CD8-positive, alpha-beta T cell (primary cell): ENCODE measurements at regions of chr16 and their contacts with region 1.

Region 1: GRCh38 chr16:85717393-85718121 is 28.8 kb upstream of the GINS2 start:
- DNase-seq: peak; percentile 17 to 72 (median 54)
- ATAC-seq: peak; percentile 31
- H3K4me3 ChIP-seq: no peak overlapping the region
- H3K4me3 Mint-ChIP-seq: no peak overlapping the region
- H3K27ac ChIP-seq: no peak overlapping the region
- H3K27ac Mint-ChIP-seq: no peak overlapping the region
- H3K4me1 ChIP-seq: peaks cover 19% of the 10 kb centered on the region
- H3K4me1 Mint-ChIP-seq: peaks cover 14% of the 10 kb centered on the region
- H3K27me3 ChIP-seq: peaks cover 0 to 5% of the 10 kb centered on the region in 2 experiments
- H3K27me3 Mint-ChIP-seq: no peaks in the 10 kb centered on the region
- CTCF ChIP-seq: peak; percentile 88

Region 2: GRCh38 chr16:85369741-85370528 is 347.6 kb before region 1 on chr16:
- CTCF ChIA-PET with region 1: interaction called, 4 read pairs
- POLR2A ChIA-PET with region 1: no interaction called
- intact Hi-C with region 1: loop called in 1 of 2 experiments (anchors 1 kb)
- DNase-seq: peak; percentile 16 to 67 (median 48)
- ATAC-seq: peak; percentile 78
- H3K4me3 ChIP-seq: no peak overlapping the region
- H3K4me3 Mint-ChIP-seq: no peak overlapping the region
- H3K27ac ChIP-seq: no peak overlapping the region
- H3K27ac Mint-ChIP-seq: no peak overlapping the region
- H3K4me1 ChIP-seq: no peaks in the 10 kb centered on the region
- H3K4me1 Mint-ChIP-seq: no peaks in the 10 kb centered on the region
- H3K27me3 ChIP-seq: no peaks in the 10 kb centered on the region
- H3K27me3 Mint-ChIP-seq: no peaks in the 10 kb centered on the region
- CTCF ChIP-seq: peak; percentile 72

Region 3: DNA sequence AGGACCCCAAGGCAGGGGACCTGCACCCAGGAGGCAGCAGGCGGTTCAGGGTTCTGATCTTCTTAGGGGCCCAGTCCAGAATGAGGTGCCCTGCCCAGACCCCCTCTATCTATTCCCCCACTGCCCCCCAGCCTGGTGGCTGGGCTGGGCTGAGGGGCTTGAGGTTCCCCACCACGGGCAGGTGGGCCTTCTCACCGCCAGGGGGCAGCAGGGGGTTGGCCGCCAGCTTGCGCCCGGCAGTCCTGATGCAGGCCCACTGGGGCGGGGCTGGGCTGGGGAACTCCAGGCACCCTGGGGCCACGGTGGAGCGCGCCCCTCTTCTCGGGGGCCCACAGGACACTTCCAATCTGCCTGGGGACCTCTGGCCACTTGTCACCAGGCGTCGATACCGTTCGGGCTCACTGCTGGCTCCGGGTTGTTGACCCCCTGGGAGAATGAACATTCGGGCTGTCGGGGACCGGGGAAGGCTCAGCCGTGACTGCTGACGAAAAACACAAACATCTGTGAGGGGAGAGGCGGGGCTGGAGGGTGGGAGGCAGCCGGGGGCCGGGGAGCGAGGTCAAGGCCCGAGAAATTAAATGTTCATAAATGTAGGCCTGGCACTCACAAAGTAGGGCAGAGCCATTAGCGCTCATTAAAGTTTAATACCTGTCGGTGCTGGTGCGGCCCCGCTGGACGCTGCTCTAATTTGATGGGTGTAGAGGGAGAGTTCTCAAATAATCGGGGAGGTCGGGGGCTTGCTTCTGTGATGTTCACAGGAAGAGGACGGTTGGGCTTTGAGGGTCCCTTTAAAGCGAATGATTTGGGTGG is 323.7 kb before region 1 on chr16:
- CTCF ChIA-PET with region 1: interaction called, 3 read pairs
- POLR2A ChIA-PET with region 1: no interaction called
- intact Hi-C with region 1: loop called (anchors 1 to 5 kb)
- DNase-seq: peak; percentile 45 to 83 (median 69)
- ATAC-seq: peak; percentile 84
- H3K4me3 ChIP-seq: no peak overlapping the region
- H3K4me3 Mint-ChIP-seq: no peak overlapping the region
- H3K27ac ChIP-seq: no peak overlapping the region
- H3K27ac Mint-ChIP-seq: no peak overlapping the region
- H3K4me1 ChIP-seq: no peaks in the 10 kb centered on the region
- H3K4me1 Mint-ChIP-seq: no peaks in the 10 kb centered on the region
- H3K27me3 ChIP-seq: no peaks in the 10 kb centered on the region
- H3K27me3 Mint-ChIP-seq: peaks cover 3% of the 10 kb centered on the region
- CTCF ChIP-seq: peak; percentile 72

Region 4: DNA sequence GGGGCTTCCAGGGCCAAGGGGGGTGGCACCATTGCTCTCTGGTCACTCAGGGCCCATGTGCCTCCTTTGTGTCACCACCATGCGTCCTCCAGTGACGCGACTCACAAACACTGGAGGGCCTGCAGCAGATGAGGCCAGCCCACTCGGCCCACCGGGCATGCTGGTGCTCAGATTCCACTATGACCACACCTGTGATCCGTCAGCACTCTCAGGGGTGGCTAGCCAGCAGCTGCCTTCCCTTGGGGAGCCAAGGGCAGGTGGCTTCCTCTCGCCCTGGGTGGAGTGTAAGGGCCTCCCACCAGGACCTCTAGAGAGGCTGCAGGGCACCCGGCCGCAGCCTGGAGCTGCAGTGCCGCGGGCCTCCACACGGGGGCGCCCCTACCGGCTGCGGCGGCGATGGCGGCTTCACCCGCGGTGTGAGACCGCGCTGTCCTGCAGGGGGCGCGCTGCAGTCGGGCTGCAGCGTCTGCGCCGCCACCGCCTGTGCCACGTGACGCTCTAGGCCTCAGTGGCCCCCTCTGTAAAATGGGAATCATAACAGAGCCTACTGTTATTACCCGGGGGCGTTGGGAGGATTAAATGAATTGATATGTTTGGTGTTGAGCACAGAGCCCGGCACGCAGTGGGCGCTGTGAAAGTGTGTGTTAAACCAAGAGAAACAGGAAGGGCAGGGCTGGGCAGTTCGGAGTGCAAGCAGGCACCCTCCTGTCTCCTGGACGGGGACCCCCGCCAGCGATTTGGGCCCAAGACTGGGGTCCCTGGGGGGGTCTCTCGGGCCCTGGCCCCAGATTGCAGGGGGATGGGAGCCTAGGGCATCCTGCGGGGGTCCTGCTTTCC is 296.8 kb before region 1 on chr16:
- CTCF ChIA-PET with region 1: no interaction called
- POLR2A ChIA-PET with region 1: no interaction called
- intact Hi-C with region 1: loop called in 1 of 2 experiments (anchors 10 kb)
- DNase-seq: peak; percentile 60 to 87 (median 72)
- ATAC-seq: peak; percentile 91
- H3K4me3 ChIP-seq: no peak overlapping the region
- H3K4me3 Mint-ChIP-seq: no peak overlapping the region
- H3K27ac ChIP-seq: no peak overlapping the region
- H3K27ac Mint-ChIP-seq: no peak overlapping the region
- H3K4me1 ChIP-seq: peaks cover 7% of the 10 kb centered on the region
- H3K4me1 Mint-ChIP-seq: peaks cover 2% of the 10 kb centered on the region
- H3K27me3 ChIP-seq: no peaks in the 10 kb centered on the region
- H3K27me3 Mint-ChIP-seq: peaks cover 2% of the 10 kb centered on the region
- CTCF ChIP-seq: peak; percentile 100

Region 5: DNA sequence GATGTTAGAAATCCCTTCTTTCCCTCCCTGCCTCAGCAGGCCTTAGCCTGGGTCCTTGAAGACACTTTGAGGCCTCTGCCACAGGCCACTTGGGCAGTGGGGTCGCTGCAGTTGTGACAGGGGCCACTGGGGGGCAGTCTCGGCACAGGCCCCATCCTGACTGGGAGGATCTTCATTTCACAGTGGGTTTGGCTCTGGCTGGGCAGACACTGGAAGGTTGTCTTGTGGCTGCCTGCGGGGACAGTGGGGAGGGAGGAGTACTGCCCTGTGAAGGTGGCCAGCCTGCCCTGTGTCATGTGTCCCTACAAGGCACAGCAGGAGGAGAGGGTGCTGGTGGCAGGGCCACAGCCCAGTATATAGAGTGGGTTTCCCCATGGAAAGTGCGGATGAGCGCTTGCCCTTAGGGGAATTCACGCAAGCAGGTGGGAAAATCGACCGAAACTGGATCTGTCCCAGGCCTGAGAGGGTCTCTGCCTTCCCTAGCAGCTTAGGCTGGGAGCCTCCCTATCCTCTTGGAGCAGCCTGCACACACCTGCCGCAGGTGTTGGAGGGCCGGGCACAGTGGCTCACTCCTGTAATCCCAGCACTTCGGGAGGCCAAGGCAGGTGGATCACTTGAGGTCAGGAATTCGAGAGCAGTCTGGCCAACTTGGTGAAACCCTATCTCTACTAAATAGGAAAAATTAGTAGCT is 57.6 kb before region 1 on chr16:
- CTCF ChIA-PET with region 1: interaction called, 32 read pairs
- POLR2A ChIA-PET with region 1: no interaction called
- intact Hi-C with region 1: loop called (anchors 1 kb)
- DNase-seq: peak; percentile 33 to 76 (median 64)
- ATAC-seq: peak; percentile 91
- H3K4me3 ChIP-seq: no peak overlapping the region
- H3K4me3 Mint-ChIP-seq: no peak overlapping the region
- H3K27ac ChIP-seq: no peak overlapping the region
- H3K27ac Mint-ChIP-seq: no peak overlapping the region
- H3K4me1 ChIP-seq: no peaks in the 10 kb centered on the region
- H3K4me1 Mint-ChIP-seq: peaks cover 4% of the 10 kb centered on the region
- H3K27me3 ChIP-seq: no peaks in the 10 kb centered on the region
- H3K27me3 Mint-ChIP-seq: no peaks in the 10 kb centered on the region
- CTCF ChIP-seq: peak; percentile 81